Calu3 (cell line): ENCODE measurements at regions of chr17 and their contacts with region 1.

Region 1: GRCh38 chr17:29124117-29124924 is 55.9 kb downstream of the MYO18A start:
- DNase-seq: peak; percentile 64
- H3K4me3 Mint-ChIP-seq: peak overlapping the region; percentile 20
- H3K27ac Mint-ChIP-seq: peak overlapping the region; percentile 5
- H3K4me1 Mint-ChIP-seq: peaks cover 17% of the 10 kb centered on the region
- H3K27me3 Mint-ChIP-seq: no peaks in the 10 kb centered on the region
- CTCF ChIP-seq: peak; percentile 41

Region 2: DNA sequence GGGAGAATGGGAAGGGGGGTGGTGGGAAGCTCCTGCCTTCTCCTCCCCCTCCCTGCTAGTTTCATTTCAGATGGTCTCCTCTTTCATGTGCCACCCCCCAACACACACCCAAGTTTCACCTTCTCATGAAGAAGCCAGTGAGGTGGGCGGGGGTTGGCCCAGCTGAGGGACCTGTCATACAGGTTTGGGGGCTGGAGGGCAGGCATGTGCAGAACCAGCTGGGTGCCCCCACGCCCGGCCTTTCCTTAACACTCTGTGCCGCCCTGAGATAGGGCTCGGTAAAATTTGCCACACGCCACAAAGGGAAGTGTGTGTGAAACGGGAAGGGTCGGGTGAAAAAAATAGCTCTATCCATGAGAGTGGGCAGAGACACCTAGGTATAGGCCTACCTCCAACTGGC is 24.0 kb before region 1 on chr17:
- CTCF ChIA-PET with region 1: no interaction called
- intact Hi-C with region 1: no loop called
- DNase-seq: no peak
- H3K4me3 Mint-ChIP-seq: no peak overlapping the region
- H3K27ac Mint-ChIP-seq: no peak overlapping the region
- H3K4me1 Mint-ChIP-seq: no peaks in the 10 kb centered on the region
- H3K27me3 Mint-ChIP-seq: no peaks in the 10 kb centered on the region
- CTCF ChIP-seq: no peak

Region 3: DNA sequence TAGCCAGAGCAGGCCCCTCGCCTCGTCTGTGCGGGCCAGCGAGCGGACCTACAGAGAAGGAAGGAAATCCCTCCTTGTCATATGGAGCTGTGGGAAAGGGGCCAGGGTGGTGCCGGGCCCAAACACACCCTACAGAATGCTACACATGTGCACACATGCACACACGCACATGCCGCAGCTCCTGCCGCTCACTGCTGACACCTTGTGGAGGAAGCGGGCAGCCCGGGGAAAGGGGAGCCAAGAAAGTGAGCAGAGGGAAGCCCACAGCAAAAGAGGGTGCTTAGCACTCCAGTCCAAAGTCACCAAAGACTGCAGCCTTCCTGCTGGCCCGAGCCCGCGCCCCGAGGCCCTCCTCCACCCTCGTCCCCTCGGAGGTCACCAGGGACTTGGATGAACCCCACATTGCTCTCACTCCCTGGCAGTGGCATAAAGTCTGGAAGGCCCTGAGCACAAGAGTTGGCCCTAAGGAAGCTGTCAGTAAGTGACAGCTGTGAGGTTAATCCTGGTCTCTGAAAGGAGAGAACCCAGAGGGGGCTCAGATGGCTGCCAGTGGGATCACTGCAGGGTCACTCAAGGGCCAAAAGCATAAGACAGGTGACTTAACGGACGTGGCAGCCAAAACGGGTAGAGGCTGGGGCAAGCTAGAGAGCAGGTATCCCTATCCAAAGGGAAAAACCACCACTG is 12.4 kb before region 1 on chr17:
- CTCF ChIA-PET with region 1: interaction called, 11 read pairs
- intact Hi-C with region 1: no loop called
- DNase-seq: peak; percentile 82
- H3K4me3 Mint-ChIP-seq: no peak overlapping the region
- H3K27ac Mint-ChIP-seq: no peak overlapping the region
- H3K4me1 Mint-ChIP-seq: peaks cover 20% of the 10 kb centered on the region
- H3K27me3 Mint-ChIP-seq: no peaks in the 10 kb centered on the region
- CTCF ChIP-seq: peak; percentile 87

Region 4: DNA sequence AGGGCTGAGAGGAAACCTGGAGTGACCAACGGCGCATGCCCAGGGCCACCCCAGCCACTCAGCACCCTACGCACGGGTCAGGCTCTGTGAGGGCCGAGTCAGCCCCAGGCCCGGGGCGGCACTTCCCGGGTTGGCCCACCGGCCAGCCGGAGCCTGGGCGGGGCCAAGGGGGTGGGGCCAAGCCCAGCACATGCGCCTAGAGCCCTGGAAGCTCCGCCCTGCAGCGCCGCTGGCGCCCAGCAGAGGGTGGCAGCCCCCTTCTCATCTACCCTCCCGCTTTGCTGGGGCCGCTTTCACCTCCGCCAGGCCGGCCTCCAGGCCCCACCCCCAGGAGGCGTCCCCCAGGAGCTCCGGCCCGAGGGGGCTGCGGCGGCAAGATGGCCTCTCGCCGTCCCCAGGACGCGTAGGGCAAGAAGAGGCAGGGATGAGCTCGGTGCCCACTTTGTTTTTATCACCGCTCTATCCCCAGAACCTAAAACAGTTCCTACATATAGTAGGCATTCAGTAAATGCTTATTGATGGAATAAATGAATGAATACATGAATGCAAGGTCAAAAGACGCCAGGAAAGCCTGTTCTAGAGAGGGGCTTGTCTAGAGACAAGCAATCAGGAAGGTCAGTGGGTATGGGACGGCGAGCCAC is 24.6 kb after region 1 on chr17:
- CTCF ChIA-PET with region 1: interaction called, 37 read pairs
- intact Hi-C with region 1: loop called (anchors 2 kb)
- DNase-seq: peak; percentile 98
- H3K4me3 Mint-ChIP-seq: peak overlapping the region; percentile 56
- H3K27ac Mint-ChIP-seq: peak overlapping the region; percentile 48
- H3K4me1 Mint-ChIP-seq: peaks cover 85% of the 10 kb centered on the region
- H3K27me3 Mint-ChIP-seq: no peaks in the 10 kb centered on the region
- CTCF ChIP-seq: peak; percentile 92

Region 5: GRCh38 chr17:29219378-29220047 is 95.2 kb after region 1 on chr17:
- CTCF ChIA-PET with region 1: interaction called, 15 read pairs
- intact Hi-C with region 1: loop called (anchors 1 kb)
- DNase-seq: peak; percentile 90
- H3K4me3 Mint-ChIP-seq: no peak overlapping the region
- H3K27ac Mint-ChIP-seq: no peak overlapping the region
- H3K4me1 Mint-ChIP-seq: peaks cover 8% of the 10 kb centered on the region
- H3K27me3 Mint-ChIP-seq: peaks cover 10% of the 10 kb centered on the region
- CTCF ChIP-seq: peak; percentile 95

Region 6: GRCh38 chr17:29369831-29370735 is 245.8 kb after region 1 on chr17:
- CTCF ChIA-PET with region 1: interaction called, 11 read pairs
- intact Hi-C with region 1: no loop called
- DNase-seq: peak; percentile 55
- H3K4me3 Mint-ChIP-seq: no peak overlapping the region
- H3K27ac Mint-ChIP-seq: no peak overlapping the region
- H3K4me1 Mint-ChIP-seq: peaks cover 6% of the 10 kb centered on the region
- H3K27me3 Mint-ChIP-seq: no peaks in the 10 kb centered on the region
- CTCF ChIP-seq: peak; percentile 58